ENCODE measurements at regions of chr1 and their contacts with region 1.

Region 1: GRCh38 chr1:227999056-227999930 is 7.5 kb upstream of the WNT3A start:
- DNase-seq: peak; percentile 83
- H3K4me3 ChIP-seq: no peak overlapping the region; a peak in 1 of 4 replicates
- H3K27ac ChIP-seq: no peak overlapping the region
- H3K4me1 ChIP-seq: no peaks in the 10 kb centered on the region
- H3K27me3 ChIP-seq: peaks cover 6% of the 10 kb centered on the region; the same call in 1 of the 2 replicates
- CTCF ChIP-seq: peak; percentile 58
- EP300 ChIP-seq: no peak
- RAD21 ChIP-seq: peak; percentile 86

Region 2: DNA sequence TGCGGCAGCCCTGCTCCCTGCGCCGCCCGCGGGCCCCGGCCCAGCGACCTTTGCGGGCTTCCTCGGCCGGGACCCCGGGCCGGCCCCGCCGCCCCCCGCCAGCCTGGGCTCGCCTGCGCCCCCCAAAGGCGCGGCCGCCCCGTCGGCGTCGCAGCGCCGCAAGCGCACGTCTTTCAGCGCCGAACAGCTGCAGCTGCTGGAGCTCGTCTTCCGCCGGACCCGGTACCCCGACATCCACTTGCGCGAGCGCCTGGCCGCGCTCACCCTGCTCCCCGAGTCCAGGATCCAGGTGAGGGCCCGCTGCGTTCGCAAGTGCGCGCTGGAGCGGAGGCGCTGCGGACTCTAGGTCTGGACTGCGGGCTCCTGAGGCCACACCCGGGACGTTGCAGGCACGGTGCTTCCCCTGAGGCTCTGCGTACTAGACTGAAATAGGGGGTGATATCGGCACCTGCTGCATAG is 1775.5 kb before region 1 on chr1:
- CTCF ChIA-PET with region 1: no interaction called
- POLR2A ChIA-PET with region 1: no interaction called
- DNase-seq: peak; percentile 82
- H3K4me3 ChIP-seq: peak overlapping the region; percentile 41 to 50; a peak in 3 of 4 replicates
- H3K27ac ChIP-seq: no peak overlapping the region
- H3K4me1 ChIP-seq: peaks cover 0 to 5% of the 10 kb centered on the region in 2 experiments; a peak in 1 of 4 replicates
- H3K27me3 ChIP-seq: no peaks in the 10 kb centered on the region
- CTCF ChIP-seq: peak; percentile 16; the same call in 1 of the 2 replicates
- EP300 ChIP-seq: no peak
- RAD21 ChIP-seq: no peak

Region 3: DNA sequence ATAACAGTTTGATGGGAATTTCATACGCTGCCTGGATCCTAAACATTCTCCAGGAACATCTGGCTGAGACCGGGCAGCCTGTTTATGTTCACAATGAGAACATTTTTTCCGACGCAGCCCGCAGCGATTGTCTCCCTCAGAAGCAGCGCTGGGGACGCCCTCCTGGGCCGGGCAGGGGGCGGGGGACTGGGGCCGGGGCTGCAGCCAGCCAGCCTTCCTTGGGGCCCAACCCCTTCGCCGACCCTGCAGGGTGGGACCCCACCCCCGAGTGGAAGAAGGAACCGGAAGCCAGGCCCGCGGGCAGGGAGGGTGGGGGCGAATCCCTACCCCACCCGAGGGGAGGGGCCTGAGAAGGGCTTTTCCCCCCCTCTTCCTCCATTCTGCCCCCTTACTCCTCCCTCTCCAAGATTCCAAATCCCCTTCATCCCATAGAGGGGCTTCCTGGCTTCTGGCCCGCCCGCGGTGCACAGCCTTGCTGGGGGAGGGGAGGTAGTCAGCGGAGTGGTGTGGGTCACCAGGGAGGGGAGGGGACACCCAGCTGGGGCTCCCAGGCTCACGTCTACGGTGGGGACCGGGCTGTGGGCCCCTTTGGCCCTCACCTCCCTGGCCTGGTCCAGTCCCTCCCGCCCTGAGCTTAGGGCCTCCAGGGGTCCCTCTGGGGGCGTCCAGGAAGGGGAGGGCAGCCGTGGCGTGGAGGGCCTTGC is 112.1 kb before region 1 on chr1:
- CTCF ChIA-PET with region 1: no interaction called
- POLR2A ChIA-PET with region 1: no interaction called
- DNase-seq: peak; percentile 84
- H3K4me3 ChIP-seq: no peak overlapping the region
- H3K27ac ChIP-seq: no peak overlapping the region
- H3K4me1 ChIP-seq: no peaks in the 10 kb centered on the region; a peak in 1 of 4 replicates
- H3K27me3 ChIP-seq: no peaks in the 10 kb centered on the region
- CTCF ChIP-seq: no peak
- EP300 ChIP-seq: no peak
- RAD21 ChIP-seq: no peak

Region 4: GRCh38 chr1:228515200-228515834 is 516.0 kb after region 1 on chr1:
- CTCF ChIA-PET with region 1: interaction called, 22 read pairs
- POLR2A ChIA-PET with region 1: no interaction called
- DNase-seq: peak; percentile 76
- H3K4me3 ChIP-seq: peak overlapping the region in 1 of 2 experiments; percentile 35; a peak in 1 of 4 replicates
- H3K27ac ChIP-seq: no peak overlapping the region
- H3K4me1 ChIP-seq: no peaks in the 10 kb centered on the region
- H3K27me3 ChIP-seq: peaks cover 39% of the 10 kb centered on the region
- CTCF ChIP-seq: peak; percentile 87
- EP300 ChIP-seq: no peak
- RAD21 ChIP-seq: peak; percentile 85